OCI-LY7 (cell line): ENCODE measurements at regions of chr3 and their contacts with region 1.

Region 1: GRCh38 chr3:123652346-123652984 is 67.6 kb upstream of the HACD2 start:
- DNase-seq: peak; percentile 50
- H3K4me3 ChIP-seq: no peak overlapping the region
- H3K27ac ChIP-seq: no peak overlapping the region
- H3K4me1 ChIP-seq: no peaks in the 10 kb centered on the region
- CTCF ChIP-seq: peak; percentile 86

Region 2: DNA sequence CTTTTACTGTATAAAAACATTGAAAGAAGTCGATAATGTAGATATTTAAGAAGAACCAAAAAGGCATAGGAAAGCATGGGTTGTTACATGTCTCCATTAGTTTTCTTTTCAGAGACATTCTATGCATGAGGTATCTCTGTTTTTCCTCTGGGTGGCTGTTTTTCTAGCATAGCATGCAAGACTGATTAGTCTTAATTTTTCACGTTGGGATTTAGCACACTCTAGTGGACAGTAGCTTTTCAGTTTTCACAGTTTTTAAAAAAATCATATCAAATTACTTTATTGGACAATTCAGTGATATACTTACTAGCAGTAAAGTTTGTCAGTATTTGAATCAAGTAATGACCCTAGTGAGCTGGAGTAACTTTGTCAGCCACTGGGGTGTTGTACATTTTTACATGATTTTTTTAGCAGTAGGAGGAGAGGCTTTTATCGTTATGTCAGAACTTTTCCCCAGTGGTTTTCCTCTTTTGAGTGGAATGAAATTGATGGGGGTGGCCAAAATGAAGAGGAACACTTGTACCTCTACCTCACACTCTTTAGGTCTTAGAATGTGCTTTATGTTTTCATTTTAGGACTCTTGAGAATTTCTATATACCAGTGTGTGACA is 393.5 kb before region 1 on chr3:
- CTCF ChIA-PET with region 1: no interaction called
- POLR2A ChIA-PET with region 1: no interaction called
- intact Hi-C with region 1: no loop called
- DNase-seq: peak; percentile 68
- H3K4me3 ChIP-seq: no peak overlapping the region
- H3K27ac ChIP-seq: no peak overlapping the region
- H3K4me1 ChIP-seq: peaks cover 7% of the 10 kb centered on the region
- CTCF ChIP-seq: peak; percentile 88

Region 3: GRCh38 chr3:123635072-123635616 is 17.3 kb before region 1 on chr3:
- CTCF ChIA-PET with region 1: no interaction called
- POLR2A ChIA-PET with region 1: no interaction called
- intact Hi-C with region 1: no loop called
- DNase-seq: no peak
- H3K4me3 ChIP-seq: no peak overlapping the region
- H3K27ac ChIP-seq: no peak overlapping the region
- H3K4me1 ChIP-seq: no peaks in the 10 kb centered on the region
- CTCF ChIP-seq: no peak

Region 4: DNA sequence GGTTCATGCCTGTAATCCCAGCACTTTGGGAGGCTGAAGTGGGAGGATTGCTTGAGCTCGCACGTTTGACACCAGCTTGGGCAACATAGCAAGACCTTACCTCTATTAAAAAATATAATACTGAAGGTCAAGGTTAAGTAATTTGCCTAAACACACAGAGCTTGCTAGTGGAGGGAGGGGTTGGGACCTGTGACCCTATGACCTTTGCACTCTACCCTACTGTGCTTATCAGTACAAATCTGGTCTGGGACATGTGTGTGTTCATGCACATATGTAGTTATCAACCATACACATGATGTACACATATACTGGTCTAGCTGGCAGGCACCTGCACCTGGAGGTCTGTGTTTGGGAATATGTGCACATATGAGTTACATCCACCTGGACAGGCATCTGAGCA is 50.3 kb after region 1 on chr3:
- CTCF ChIA-PET with region 1: no interaction called
- POLR2A ChIA-PET with region 1: no interaction called
- intact Hi-C with region 1: loop called (anchors 1 kb)
- DNase-seq: no peak
- H3K4me3 ChIP-seq: no peak overlapping the region
- H3K27ac ChIP-seq: no peak overlapping the region
- H3K4me1 ChIP-seq: no peaks in the 10 kb centered on the region
- CTCF ChIP-seq: no peak

Region 5: DNA sequence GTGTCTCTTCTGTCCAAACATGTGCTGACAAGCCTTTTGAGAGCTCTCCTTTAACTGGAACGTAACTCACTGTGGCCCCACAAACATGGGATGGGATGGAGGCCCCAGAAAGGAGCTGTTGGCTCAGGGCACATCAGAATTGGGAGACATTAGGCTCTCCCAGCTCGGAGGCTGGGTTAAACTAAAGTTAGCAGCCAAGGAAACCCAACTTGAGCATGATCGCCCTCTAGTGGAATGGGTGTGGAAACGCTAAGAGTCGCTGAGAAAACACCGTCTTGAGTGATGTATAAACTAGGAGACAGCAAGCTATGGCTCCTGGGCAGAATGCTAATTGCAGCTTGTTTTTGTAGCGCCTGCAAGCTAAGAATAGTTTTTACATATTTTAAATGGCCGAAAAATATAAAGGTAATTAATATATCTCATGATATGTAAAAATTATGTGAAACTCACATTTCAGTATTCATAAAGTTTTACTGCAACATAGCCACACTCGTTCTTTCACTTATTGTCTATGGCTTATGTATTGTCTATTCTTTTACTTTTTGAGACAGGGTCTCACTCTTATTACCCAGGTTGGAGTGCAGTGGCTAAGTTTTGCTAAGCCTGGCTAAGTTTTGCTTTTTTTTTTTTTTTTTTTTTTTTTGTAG is 71.2 kb after region 1 on chr3:
- CTCF ChIA-PET with region 1: interaction called, 10 read pairs
- POLR2A ChIA-PET with region 1: interaction called, 3 read pairs
- intact Hi-C with region 1: loop called (anchors 2 kb)
- DNase-seq: peak; percentile 81
- H3K4me3 ChIP-seq: peak overlapping the region; percentile 25
- H3K27ac ChIP-seq: no peak overlapping the region
- H3K4me1 ChIP-seq: no peaks in the 10 kb centered on the region
- CTCF ChIP-seq: peak; percentile 88